CD14-positive monocyte (primary cell): ENCODE measurements at regions of chr17 and their contacts with region 1.

Region 1: DNA sequence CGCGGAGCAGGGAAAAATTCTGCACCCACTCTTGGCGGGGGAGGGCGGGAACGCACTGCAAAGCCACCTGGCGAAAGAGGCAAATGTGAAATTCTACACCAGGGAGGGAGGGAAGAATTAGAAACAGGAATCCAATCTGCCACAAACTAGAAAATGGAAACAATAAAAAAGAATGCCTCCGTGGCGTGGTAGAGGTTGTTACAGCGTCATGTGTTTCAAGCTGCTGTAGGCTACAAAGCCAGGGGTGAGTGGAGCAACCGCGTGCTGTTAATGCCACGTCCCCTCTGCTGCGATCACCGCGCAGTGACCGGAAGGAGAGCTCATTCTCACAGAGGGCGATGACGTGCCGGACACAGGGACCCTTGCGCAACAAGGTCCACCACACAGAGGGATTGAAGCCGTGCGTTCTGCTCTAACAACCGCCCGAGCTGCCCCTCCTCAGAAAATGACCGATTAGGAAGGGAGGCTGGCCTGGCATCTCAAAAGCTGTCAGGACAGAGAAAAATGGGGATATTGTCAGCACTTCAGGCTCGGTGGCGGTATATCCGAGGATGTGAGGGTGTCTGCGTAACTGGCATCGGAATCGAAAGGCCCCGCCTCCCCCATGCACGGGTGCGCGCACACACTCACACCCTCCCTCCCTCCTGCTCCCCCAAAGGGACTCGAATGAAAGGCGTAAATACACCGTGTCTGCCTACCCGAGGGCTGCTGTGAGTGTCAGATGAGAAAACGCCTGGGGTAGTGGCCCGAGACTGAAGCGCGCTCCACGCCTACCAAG is 70.8 kb upstream of the TNRC6C start:
- DNase-seq: peak; percentile 95 to 98 (median 98)
- H3K4me3 ChIP-seq: peak overlapping the region; percentile 32 to 69 (median 39)
- H3K4me3 Mint-ChIP-seq: peak overlapping the region; percentile 84 to 95
- H3K27ac ChIP-seq: peak overlapping the region; percentile 39 to 78
- H3K27ac Mint-ChIP-seq: peak overlapping the region; percentile 85 to 96 (median 96)
- H3K4me1 ChIP-seq: peaks cover 41 to 43% of the 10 kb centered on the region in 2 donors
- H3K4me1 Mint-ChIP-seq: peaks cover 51% of the 10 kb centered on the region
- H3K27me3 ChIP-seq: peaks cover 2 to 64% of the 10 kb centered on the region in 2 donors
- H3K27me3 Mint-ChIP-seq: peaks cover 45 to 77% (median 72%) of the 10 kb centered on the region in 3 donors
- CTCF ChIP-seq: no peak

Region 2: DNA sequence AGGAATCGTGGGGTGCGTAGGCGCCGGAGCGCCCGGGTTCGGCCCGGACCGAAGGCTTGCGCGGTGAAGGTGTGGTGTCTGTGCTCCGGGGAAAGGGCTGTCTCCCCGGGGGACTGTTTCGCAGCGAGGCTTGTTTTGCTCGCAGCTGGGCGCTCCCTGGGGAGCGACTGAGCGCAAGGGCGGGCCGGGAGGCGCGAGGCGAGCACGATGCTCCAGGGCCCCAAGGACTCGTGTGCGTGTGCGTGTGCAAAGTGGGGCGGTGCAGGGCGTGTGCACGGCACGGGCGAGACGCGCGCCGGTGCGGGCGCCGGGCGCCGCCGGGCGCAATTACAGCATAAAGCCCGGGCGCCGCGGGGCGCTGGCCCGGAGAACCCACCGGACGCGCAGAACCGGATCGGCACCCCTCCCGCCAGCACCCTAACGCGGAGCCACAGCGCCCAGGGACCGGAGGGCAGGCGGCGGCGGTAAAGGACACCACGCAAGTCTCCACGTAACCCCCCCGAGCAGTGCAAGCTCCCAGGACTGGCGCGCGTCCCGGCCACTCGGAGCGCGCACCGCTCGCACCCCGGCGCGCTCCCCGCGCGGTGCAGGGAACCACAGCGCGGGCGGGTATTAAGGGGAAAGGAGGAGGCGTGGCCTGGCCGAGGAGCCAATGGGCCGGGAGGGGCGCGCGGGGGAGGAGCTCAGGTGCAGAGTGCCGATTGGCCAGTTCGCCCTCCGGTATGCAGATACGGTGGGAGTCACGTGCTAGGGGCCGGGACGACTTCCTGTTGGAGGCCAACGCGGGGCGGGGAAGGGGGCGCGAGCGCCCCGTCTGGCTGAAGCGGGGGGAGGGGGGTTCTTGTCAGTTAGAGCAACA is 70.4 kb after region 1 on chr17 and contains the start of gene TNRC6C:
- intact Hi-C with region 1: loop called in 1 of 2 experiments (anchors 5 kb)
- DNase-seq: peak; percentile 99
- H3K4me3 ChIP-seq: peak within 1 kb of the TSS; percentile 59 to 79 (median 74)
- H3K4me3 Mint-ChIP-seq: peak within 1 kb of the TSS; percentile 86 to 97
- H3K27ac ChIP-seq: peak within 1 kb of the TSS; percentile 5 to 72
- H3K27ac Mint-ChIP-seq: peak within 1 kb of the TSS in 6 of 7 donors; percentile 12 to 91 (median 58)
- H3K4me1 ChIP-seq: peaks cover 20 to 34% of the 10 kb centered on the region in 2 donors
- H3K4me1 Mint-ChIP-seq: peaks cover 28% of the 10 kb centered on the region
- H3K27me3 ChIP-seq: peaks cover 53 to 70% of the 10 kb centered on the region in 2 donors
- H3K27me3 Mint-ChIP-seq: peaks cover 68 to 73% (median 72%) of the 10 kb centered on the region in 3 donors
- CTCF ChIP-seq: no peak
- polyA plus RNA-seq, gene TNRC6C: 0.38 to 0.80 (median 0.46) TPM